ENCODE measurements at regions of chr6 and their contacts with region 1.

Region 1: GRCh38 chr6:106223300-106223930 is 102.1 kb downstream of the ATG5 start:
- DNase-seq: peak; percentile 30
- CTCF ChIP-seq: peak; percentile 59

Region 2: GRCh38 chr6:105488516-105489215 is 734.7 kb before region 1 on chr6:
- CTCF ChIA-PET with region 1: interaction called, 13 read pairs
- POLR2A ChIA-PET with region 1: no interaction called
- DNase-seq: no peak
- CTCF ChIP-seq: no peak

Region 3: GRCh38 chr6:106085984-106086813 is 137.2 kb before region 1 on chr6 and contains the start of gene PRDM1:
- CTCF ChIA-PET with region 1: interaction called, 43 read pairs
- POLR2A ChIA-PET with region 1: no interaction called
- DNase-seq: peak; percentile 82
- CTCF ChIP-seq: peak; percentile 26

Region 4: GRCh38 chr6:106141441-106142237 is 81.8 kb before region 1 on chr6:
- CTCF ChIA-PET with region 1: interaction called, 17 read pairs
- POLR2A ChIA-PET with region 1: no interaction called
- DNase-seq: peak; percentile 62
- CTCF ChIP-seq: no peak

Region 5: DNA sequence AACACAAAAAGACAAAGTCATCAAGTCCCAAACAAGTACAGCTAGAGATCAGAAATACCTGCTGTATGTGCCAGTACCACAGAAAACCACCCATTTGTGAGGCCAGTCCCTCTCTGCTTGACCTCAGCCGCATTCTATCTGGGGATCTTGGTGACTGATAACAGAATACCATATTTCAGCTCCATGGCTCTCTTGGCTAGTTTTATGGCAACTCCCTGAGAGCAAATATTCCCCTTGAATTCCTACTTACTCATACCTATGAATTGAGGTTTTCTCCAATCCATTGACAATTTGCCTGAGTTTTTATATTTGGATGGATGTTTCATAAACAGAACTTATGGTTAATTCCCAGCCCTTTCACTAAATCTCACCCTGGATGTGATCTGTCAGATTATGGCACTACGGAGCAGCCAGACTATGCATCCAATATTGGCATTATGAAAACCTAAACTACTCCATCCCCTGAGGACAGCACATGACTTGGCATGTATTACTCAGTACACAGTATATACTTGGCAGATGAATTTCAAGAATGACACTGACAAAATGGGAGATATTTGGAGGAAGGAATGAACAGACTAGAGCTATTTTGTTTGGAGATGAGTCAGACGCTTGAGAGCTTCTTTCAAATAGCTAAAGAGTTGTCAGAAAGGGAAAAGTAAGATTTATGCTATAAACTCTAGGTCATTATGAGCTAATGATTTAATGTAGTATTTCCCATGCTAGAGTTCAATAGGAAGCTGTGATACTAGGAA is 41.6 kb before region 1 on chr6:
- CTCF ChIA-PET with region 1: interaction called, 16 read pairs
- POLR2A ChIA-PET with region 1: no interaction called
- DNase-seq: no peak
- CTCF ChIP-seq: no peak

Region 6: DNA sequence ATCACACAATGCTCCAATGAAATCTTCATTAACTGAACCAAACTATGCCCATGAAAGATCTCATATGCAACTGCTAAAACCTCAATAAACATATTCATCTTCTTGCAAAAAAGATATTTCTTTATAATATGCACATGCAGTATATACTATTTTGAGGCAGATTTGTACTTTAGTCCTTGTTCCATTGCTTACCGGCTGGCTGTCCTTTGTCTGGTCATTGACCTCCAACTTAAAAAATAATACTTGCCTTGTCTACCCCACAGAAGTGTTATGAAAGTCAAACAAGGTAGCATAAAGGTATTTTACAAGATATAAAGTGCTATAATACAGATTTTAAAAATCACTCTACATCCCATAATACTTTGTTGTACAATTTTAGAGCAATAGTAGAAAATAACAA is 13.9 kb after region 1 on chr6:
- CTCF ChIA-PET with region 1: interaction called, 16 read pairs
- POLR2A ChIA-PET with region 1: no interaction called
- DNase-seq: no peak
- CTCF ChIP-seq: no peak

Measured in GM10248 (cell line).